Activated T-helper 2 cell treated with anti-CD3 and anti-CD28 coated beads, Interferon-gamma antibody, Interleukin-2, Interleukin-4, amounts not matched to agents 10 μg/mL and 5 μg/mL and 100 μg/mL, durations not matched to agents 14 hours and 24 hours and 36 hours (primary cell): ENCODE measurements at regions of chr9 and their contacts with region 1.

Region 1: GRCh38 chr9:111759762-111760639 is 34.7 kb downstream of the SHOC1 start:
- DNase-seq: no peak
- H3K4me3 Mint-ChIP-seq: no peak overlapping the region
- H3K27ac Mint-ChIP-seq: no peak overlapping the region
- H3K4me1 Mint-ChIP-seq: peaks cover 3% of the 10 kb centered on the region
- H3K27me3 Mint-ChIP-seq: no peaks in the 10 kb centered on the region

Region 2: DNA sequence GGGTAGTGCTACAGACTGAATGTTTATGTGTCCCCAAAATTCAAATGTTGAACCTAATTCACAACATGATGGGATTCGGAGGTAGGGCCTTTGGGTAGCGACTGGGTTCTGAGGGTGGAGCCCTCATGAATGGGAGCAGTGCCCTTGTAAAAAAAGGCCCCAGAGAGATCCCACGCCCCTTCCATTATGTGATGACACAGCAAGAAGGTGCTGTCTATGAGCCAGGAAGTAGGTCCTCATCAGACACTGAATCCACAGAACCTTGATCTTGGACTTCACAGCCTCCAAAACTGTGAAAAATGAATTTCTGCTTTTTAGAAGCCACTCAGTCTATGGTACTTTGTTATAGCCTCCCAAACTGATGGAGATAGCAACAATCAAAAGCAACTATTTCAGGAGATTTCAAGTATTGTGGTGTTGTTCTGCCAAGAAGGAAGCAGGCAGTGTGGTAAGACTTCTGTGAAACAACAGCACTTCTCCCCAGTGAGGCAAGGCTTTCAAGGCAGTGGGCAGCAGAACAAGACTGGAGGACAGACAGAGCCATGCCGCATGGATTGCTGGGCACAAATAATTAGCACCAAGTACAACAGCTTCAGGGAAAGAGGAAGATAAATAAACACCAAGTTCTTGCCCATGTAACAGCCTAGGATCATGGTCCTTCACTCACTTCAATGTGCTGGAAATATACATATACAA is 506.1 kb before region 1 on chr9:
- intact Hi-C with region 1: no loop called
- DNase-seq: no peak
- H3K4me3 Mint-ChIP-seq: no peak overlapping the region
- H3K27ac Mint-ChIP-seq: no peak overlapping the region
- H3K4me1 Mint-ChIP-seq: no peaks in the 10 kb centered on the region
- H3K27me3 Mint-ChIP-seq: no peaks in the 10 kb centered on the region

Region 3: DNA sequence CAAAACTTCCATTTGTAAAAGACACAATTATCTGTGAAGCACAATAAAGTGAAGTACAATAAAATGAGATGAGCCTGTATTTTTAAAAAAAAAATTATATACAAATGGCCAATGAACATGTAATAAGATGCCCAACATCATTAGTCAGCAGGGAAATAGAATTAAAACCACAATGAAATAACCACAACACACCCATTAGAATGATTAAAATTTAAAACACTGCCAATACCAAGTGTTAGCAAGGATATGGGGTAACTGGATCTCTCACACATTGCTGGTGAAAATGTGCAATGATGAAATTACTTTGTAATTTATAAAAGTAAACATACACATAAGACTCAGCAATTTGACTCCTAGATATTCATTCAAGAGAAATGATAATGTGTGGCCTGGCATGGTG is 28.1 kb before region 1 on chr9:
- intact Hi-C with region 1: no loop called
- DNase-seq: no peak
- H3K4me3 Mint-ChIP-seq: no peak overlapping the region
- H3K27ac Mint-ChIP-seq: no peak overlapping the region
- H3K4me1 Mint-ChIP-seq: peaks cover 3% of the 10 kb centered on the region
- H3K27me3 Mint-ChIP-seq: no peaks in the 10 kb centered on the region

Region 4: GRCh38 chr9:112061152-112061740 is 301.2 kb after region 1 on chr9:
- intact Hi-C with region 1: no loop called
- DNase-seq: peak; percentile 18
- H3K4me3 Mint-ChIP-seq: no peak overlapping the region
- H3K27ac Mint-ChIP-seq: no peak overlapping the region
- H3K4me1 Mint-ChIP-seq: peaks cover 17% of the 10 kb centered on the region
- H3K27me3 Mint-ChIP-seq: no peaks in the 10 kb centered on the region

Region 5: DNA sequence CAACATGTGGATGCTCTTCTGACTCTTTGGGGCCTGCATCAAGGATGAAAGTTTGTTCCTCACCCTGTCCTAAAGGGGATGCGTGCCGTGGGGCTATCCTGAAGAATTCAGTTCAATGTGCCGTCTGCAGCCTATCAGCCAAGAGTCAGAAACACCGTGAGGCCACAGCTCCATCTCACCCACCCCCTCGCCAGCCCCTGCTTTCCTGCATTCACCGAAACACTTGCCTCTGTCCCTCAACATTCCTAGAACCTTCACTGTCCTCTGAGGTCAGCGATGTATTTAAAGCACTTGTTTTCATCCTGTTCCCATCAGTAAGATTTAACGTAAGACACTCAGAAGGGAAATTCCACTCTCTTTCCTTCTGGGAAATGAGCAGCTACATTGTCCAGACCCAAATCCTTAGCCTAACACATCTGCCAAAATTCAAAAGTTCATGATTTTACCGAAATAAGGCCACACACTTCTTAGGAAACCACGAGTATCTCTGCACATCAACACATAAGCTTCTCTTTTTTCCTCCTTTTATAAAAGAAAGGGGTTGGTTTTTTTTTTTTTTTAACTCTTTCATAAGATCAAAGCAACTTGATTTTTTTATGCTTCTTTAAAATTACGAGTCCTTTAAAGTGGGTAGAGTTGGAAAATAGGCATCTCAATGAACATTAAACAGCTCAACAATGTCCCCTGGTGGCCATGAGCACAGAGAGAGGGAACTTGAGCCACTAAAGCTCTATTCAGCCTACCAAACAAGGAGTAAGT is 314.4 kb after region 1 on chr9:
- intact Hi-C with region 1: loop called (anchors 1 kb)
- DNase-seq: peak; percentile 31
- H3K4me3 Mint-ChIP-seq: no peak overlapping the region
- H3K27ac Mint-ChIP-seq: no peak overlapping the region
- H3K4me1 Mint-ChIP-seq: peaks cover 9% of the 10 kb centered on the region
- H3K27me3 Mint-ChIP-seq: peaks cover 1% of the 10 kb centered on the region